CD4-positive, alpha-beta T cell (primary cell): ENCODE measurements at regions of chr1 and their contacts with region 1.

Region 1: GRCh38 chr1:10308001-10308400 is 90.9 kb upstream of the PGD start:
- DNase-seq: peak in 8 of 14 experiments; percentile 2 to 81 (median 26)
- ATAC-seq: peak; percentile 93
- H3K4me3 ChIP-seq: no peak overlapping the region
- H3K4me3 Mint-ChIP-seq: no peak overlapping the region
- H3K27ac ChIP-seq: no peak overlapping the region
- H3K27ac Mint-ChIP-seq: peak overlapping the region; percentile 89
- H3K4me1 ChIP-seq: peaks cover 4% of the 10 kb centered on the region
- H3K4me1 Mint-ChIP-seq: peaks cover 11% of the 10 kb centered on the region
- H3K27me3 ChIP-seq: no peaks in the 10 kb centered on the region
- H3K27me3 Mint-ChIP-seq: no peaks in the 10 kb centered on the region
- CTCF ChIP-seq: no peak

Region 2: GRCh38 chr1:10324627-10325026 is 16.6 kb after region 1 on chr1:
- CTCF ChIA-PET with region 1: no interaction called
- POLR2A ChIA-PET with region 1: no interaction called
- intact Hi-C with region 1: loop called (anchors 1 kb)
- DNase-seq: peak in 5 of 14 experiments; percentile 6 to 57 (median 47)
- ATAC-seq: no peak
- H3K4me3 ChIP-seq: peak overlapping the region; percentile 22
- H3K4me3 Mint-ChIP-seq: peak overlapping the region; percentile 73
- H3K27ac ChIP-seq: peak overlapping the region in 1 of 2 donors; percentile 29
- H3K27ac Mint-ChIP-seq: peak overlapping the region; percentile 77
- H3K4me1 ChIP-seq: no peaks in the 10 kb centered on the region
- H3K4me1 Mint-ChIP-seq: no peaks in the 10 kb centered on the region
- H3K27me3 ChIP-seq: no peaks in the 10 kb centered on the region
- H3K27me3 Mint-ChIP-seq: no peaks in the 10 kb centered on the region
- CTCF ChIP-seq: no peak

Region 3: DNA sequence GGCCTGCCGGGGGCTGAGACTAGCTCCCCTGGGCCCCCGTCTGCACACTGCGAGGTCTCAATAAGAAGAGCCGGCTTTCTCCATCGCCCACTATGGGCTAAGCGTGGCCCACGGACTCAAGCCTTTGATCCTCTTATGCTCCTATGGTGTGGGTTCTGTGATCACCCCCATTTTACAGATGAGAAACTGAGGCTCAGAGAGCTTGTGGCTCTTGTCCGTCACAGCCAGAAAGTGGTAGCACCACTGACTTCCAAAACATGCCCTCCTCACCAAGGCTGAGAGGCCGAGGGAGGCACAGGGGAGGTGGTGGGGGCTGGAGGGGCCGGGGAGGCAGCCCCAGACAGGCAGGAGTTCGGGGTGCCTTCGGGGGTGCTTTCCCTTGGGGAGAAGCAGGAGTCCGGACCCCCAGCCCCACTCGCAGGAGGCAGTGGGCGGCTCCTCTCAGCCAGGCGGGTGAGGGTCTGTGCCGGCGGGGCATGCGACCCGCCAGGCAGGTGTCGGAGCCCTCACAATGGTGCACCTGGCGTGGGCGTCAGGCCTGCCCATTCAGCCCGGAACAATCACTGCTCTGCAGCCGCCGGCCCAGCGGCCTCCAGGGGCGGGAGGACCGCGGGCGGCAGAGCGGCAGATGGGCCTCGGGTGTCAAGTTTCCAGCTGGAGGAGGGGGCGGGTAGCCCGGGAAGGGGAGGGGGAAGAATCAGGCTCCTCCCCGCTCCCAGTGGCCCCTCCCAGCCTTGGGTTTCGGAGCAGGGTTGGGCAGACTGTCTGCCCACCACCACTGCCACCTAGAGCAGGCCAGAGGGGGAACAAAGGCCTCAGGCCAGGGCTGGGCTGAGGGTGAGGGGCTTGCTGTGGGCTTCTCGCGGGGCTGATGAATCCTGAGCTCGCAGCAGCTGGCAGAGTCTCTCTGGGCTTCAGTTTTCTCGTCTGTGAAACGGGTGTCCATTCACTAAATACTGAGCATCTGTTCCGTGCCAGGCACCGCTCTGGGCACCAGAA is 527.7 kb after region 1 on chr1:
- CTCF ChIA-PET with region 1: no interaction called
- POLR2A ChIA-PET with region 1: no interaction called
- intact Hi-C with region 1: no loop called
- DNase-seq: no peak
- ATAC-seq: no peak
- H3K4me3 ChIP-seq: no peak overlapping the region
- H3K4me3 Mint-ChIP-seq: no peak overlapping the region
- H3K27ac ChIP-seq: no peak overlapping the region
- H3K27ac Mint-ChIP-seq: no peak overlapping the region
- H3K4me1 ChIP-seq: peaks cover 4% of the 10 kb centered on the region
- H3K4me1 Mint-ChIP-seq: no peaks in the 10 kb centered on the region
- H3K27me3 ChIP-seq: peaks cover 25 to 30% of the 10 kb centered on the region in 2 experiments
- H3K27me3 Mint-ChIP-seq: peaks cover 57% of the 10 kb centered on the region
- CTCF ChIP-seq: no peak